Adrenal gland (tissue), 19 donors: ENCODE measurements at regions of chr6 and their contacts with region 1.

Region 1: GRCh38 chr6:111873178-111874024 is at the start of gene FYN:
- DNase-seq: peak; percentile 93 to 98 (median 96)
- H3K4me3 ChIP-seq: peak within 1 kb of the TSS in 2 of 4 donors; percentile 29 to 76
- H3K27ac ChIP-seq: peak within 1 kb of the TSS in 2 of 5 donors; percentile 76 to 80
- H3K4me1 ChIP-seq: peaks cover 0 to 9% of the 10 kb centered on the region in 2 donors
- H3K27me3 ChIP-seq: peaks cover 19% of the 10 kb centered on the region
- CTCF ChIP-seq: peak in 5 of 6 experiments; percentile 24 to 69 (median 43)
- POLR2A ChIP-seq: peak; percentile 42 to 45
- total RNA-seq, gene FYN: 10.7 to 36.5 (median 22.1) TPM

Region 2: DNA sequence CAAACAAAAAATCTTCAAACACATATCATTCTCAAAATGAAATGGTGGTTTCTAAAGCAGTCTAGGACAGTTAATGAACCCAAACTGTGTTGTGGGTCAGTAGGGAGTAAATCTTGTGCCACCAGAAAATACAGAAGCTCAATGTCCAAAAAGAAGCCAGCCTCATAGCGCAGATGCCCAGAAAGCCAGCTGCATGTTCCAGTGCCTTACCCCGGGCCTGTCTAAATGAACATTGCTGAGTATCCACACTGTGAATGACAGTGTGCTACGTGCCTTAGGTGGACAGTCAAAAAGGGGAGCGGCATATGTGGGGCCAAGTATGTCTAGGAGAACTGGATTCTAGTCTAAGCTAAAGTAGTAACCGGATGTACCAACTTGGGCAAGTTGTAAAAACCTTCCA is 11.1 kb before region 1 on chr6:
- intact Hi-C with region 1: loop called in 1 of 2 experiments (anchors 2 kb)
- DNase-seq: no peak
- H3K4me3 ChIP-seq: no peak overlapping the region
- H3K27ac ChIP-seq: no peak overlapping the region
- H3K4me1 ChIP-seq: no peaks in the 10 kb centered on the region
- H3K27me3 ChIP-seq: no peaks in the 10 kb centered on the region
- CTCF ChIP-seq: no peak
- POLR2A ChIP-seq: no peak

Region 3: GRCh38 chr6:112576423-112576822 is 703.0 kb after region 1 on chr6:
- intact Hi-C with region 1: no loop called
- DNase-seq: no peak
- H3K4me3 ChIP-seq: no peak overlapping the region
- H3K27ac ChIP-seq: no peak overlapping the region
- H3K4me1 ChIP-seq: no peaks in the 10 kb centered on the region
- H3K27me3 ChIP-seq: no peaks in the 10 kb centered on the region
- CTCF ChIP-seq: no peak
- POLR2A ChIP-seq: no peak